HCT116 (cell line): ENCODE measurements at regions of chr4 and their contacts with region 1.

Region 1: GRCh38 chr4:99875072-99875471 is 19.2 kb downstream of the LAMTOR3 start:
- DNase-seq: no peak
- ATAC-seq: no peak
- H3K4me3 ChIP-seq: no peak overlapping the region
- H3K27ac ChIP-seq: no peak overlapping the region
- H3K4me1 ChIP-seq: no peaks in the 10 kb centered on the region
- H3K27me3 ChIP-seq: no peaks in the 10 kb centered on the region
- CTCF ChIP-seq: no peak
- POLR2A ChIP-seq: no peak
- RAD21 ChIP-seq: no peak

Region 2: DNA sequence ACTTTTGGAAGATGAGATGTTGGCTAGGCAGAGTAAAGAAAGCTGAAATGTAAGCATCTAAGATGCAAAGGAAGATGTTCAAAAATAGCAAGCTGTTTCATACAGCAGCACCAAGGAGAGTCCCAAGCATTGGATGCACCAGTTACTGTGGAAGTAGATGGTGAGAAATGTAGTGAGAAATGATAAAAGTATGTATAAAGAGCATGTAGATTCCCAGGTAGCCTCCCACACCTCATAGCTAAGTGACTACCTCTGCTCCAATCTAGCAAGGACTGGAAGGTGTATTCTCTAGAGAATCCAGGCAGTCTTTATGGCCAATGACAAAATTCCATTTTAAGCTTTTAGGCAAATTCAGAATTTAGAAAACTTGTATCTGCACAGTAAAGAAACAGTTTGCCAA is 166.5 kb before region 1 on chr4:
- CTCF ChIA-PET with region 1: no interaction called
- POLR2A ChIA-PET with region 1: no interaction called
- RAD21 ChIA-PET with region 1: interaction called in 1 of 2 experiments, 11 read pairs
- intact Hi-C with region 1: no loop called
- DNase-seq: no peak
- ATAC-seq: no peak
- H3K4me3 ChIP-seq: no peak overlapping the region
- H3K27ac ChIP-seq: no peak overlapping the region
- H3K4me1 ChIP-seq: peaks cover 0 to 6% of the 10 kb centered on the region in 2 experiments; a peak in 1 of 4 replicates
- H3K27me3 ChIP-seq: no peaks in the 10 kb centered on the region
- CTCF ChIP-seq: no peak
- POLR2A ChIP-seq: no peak
- RAD21 ChIP-seq: no peak

Region 3: GRCh38 chr4:100348472-100348871 is 473.4 kb after region 1 on chr4:
- CTCF ChIA-PET with region 1: no interaction called
- POLR2A ChIA-PET with region 1: no interaction called
- RAD21 ChIA-PET with region 1: no interaction called
- intact Hi-C with region 1: no loop called
- DNase-seq: peak; percentile 88
- ATAC-seq: peak; percentile 96
- H3K4me3 ChIP-seq: peak overlapping the region in 1 of 2 experiments; percentile 18; a peak in 2 of 4 replicates
- H3K27ac ChIP-seq: no peak overlapping the region
- H3K4me1 ChIP-seq: peaks cover 9 to 13% of the 10 kb centered on the region in 2 experiments; a peak in 3 of 4 replicates
- H3K27me3 ChIP-seq: no peaks in the 10 kb centered on the region
- CTCF ChIP-seq: no peak
- POLR2A ChIP-seq: no peak
- RAD21 ChIP-seq: peak; percentile 23; the same call in 1 of the 2 replicates

Region 4: DNA sequence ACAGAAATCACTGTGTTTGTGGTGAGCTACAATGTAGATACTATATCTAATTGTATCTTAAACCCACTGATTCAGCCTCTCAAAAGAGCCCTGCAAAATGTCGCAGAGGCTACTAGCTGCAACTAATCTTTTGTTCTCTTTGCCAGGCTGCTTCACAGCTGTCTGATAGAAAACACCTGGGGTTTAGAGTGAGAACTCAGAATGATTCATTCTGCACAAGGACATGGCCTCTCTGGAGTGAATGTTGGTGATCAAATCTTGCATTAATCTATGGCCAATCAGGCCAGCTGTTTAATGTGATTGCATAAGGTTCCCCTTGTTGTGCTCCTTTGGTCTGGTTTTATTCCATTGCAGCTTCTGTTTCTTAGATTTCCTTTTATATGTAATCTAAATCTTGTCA is 542.5 kb after region 1 on chr4:
- CTCF ChIA-PET with region 1: no interaction called
- POLR2A ChIA-PET with region 1: no interaction called
- RAD21 ChIA-PET with region 1: no interaction called
- intact Hi-C with region 1: no loop called
- DNase-seq: no peak
- ATAC-seq: no peak
- H3K4me3 ChIP-seq: no peak overlapping the region
- H3K27ac ChIP-seq: no peak overlapping the region
- H3K4me1 ChIP-seq: peaks cover 0 to 5% of the 10 kb centered on the region in 2 experiments; a peak in 2 of 4 replicates
- H3K27me3 ChIP-seq: no peaks in the 10 kb centered on the region
- CTCF ChIP-seq: no peak
- POLR2A ChIP-seq: no peak
- RAD21 ChIP-seq: no peak